Endothelial cell of umbilical vein (primary cell): ENCODE measurements at regions of chr14 and their contacts with region 1.

Region 1: DNA sequence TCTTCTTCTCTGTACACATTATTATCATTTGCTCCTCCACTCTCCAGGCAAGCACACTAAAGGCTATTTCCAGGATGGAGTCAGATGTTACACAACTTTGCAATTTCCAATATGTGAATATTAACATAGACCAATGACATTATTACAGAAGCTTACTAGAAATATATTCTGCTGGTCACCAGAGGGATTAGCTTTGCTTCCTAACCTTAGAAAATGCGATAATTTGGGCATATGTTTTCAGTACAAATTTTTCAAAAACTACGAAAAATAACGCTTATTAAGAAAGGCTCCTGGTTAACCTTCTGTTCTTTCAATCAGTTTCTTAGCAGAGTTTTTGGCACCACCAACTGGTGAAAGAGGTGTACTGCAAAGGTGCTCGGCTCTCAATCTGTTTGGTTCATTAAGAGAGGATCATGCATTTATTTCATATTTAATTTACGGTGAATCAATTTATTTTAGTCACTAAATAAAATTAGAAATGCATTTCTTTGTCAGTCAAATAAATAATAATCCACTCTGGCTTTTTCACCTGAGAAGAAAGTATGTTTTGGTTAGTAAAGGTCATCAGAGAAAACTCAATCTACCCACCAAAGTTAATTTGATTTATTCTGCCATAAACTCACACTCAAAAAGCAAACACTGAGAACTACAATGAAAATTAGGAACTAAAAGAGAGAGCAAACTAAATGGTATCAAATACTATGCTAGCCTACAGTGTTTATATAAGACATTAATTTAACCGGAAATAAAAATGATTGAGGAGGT is 39.2 kb downstream of the EFCAB11 start:
- DNase-seq: peak; percentile 79
- H3K4me3 ChIP-seq: no peak overlapping the region
- H3K27ac ChIP-seq: no peak overlapping the region
- H3K4me1 ChIP-seq: no peaks in the 10 kb centered on the region
- H3K27me3 ChIP-seq: no peaks in the 10 kb centered on the region
- CTCF ChIP-seq: peak; percentile 75
- POLR2A ChIP-seq: no peak

Region 2: DNA sequence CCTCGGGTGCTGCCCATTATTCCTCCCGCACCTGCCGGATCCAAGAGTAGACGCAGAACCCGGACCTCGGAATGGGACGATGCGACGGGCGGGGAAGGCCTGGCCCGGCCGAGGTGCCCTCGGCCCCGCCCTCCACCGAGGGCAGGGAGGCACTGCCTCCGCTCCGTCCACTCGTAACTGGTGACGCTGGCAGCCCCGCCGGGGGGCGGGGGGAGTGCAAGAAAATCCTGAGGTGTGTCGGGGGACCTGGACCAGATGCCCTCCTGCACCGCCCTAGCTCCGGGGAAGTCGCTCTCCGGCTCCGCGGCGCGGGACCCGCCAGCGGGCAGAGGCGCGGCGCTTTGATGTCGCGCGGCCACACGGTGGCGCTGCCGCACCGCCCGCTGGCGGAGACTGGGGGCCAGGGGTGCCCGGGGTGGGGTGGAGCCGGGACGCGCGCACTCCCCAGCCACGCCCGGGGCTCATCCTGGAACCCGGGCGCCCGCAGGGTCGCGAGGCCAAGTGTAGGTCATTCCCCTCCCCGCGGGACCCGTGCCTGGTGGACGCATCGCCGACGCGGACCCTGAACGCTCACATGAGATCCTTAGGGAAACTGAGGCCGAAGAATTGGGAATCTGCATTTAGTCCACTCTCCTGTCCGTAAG is 888.1 kb before region 1 on chr14:
- CTCF ChIA-PET with region 1: interaction called, 18 read pairs
- POLR2A ChIA-PET with region 1: no interaction called
- dilution Hi-C with region 1: no loop called
- intact Hi-C with region 1: loop called (anchors 1 kb)
- DNase-seq: peak; percentile 25
- H3K4me3 ChIP-seq: peak overlapping the region; percentile 40 to 65 (median 56)
- H3K27ac ChIP-seq: no peak overlapping the region
- H3K4me1 ChIP-seq: peaks cover 9% of the 10 kb centered on the region
- H3K27me3 ChIP-seq: peaks cover 25 to 39% of the 10 kb centered on the region in 2 experiments
- CTCF ChIP-seq: peak; percentile 74 to 88
- POLR2A ChIP-seq: no peak

Region 3: GRCh38 chr14:89178802-89179535 is 736.3 kb before region 1 on chr14:
- CTCF ChIA-PET with region 1: interaction called, 7 read pairs
- POLR2A ChIA-PET with region 1: no interaction called
- dilution Hi-C with region 1: no loop called
- intact Hi-C with region 1: loop called (anchors 1 kb)
- DNase-seq: no peak
- H3K4me3 ChIP-seq: no peak overlapping the region
- H3K27ac ChIP-seq: no peak overlapping the region
- H3K4me1 ChIP-seq: no peaks in the 10 kb centered on the region
- H3K27me3 ChIP-seq: no peaks in the 10 kb centered on the region
- CTCF ChIP-seq: no peak
- POLR2A ChIP-seq: no peak

Region 4: GRCh38 chr14:89240414-89240813 is 674.9 kb before region 1 on chr14:
- CTCF ChIA-PET with region 1: no interaction called
- POLR2A ChIA-PET with region 1: no interaction called
- dilution Hi-C with region 1: no loop called
- intact Hi-C with region 1: loop called (anchors 5 kb)
- DNase-seq: peak; percentile 22
- H3K4me3 ChIP-seq: no peak overlapping the region
- H3K27ac ChIP-seq: peak overlapping the region; percentile 54
- H3K4me1 ChIP-seq: peaks cover 17% of the 10 kb centered on the region
- H3K27me3 ChIP-seq: no peaks in the 10 kb centered on the region
- CTCF ChIP-seq: no peak
- POLR2A ChIP-seq: no peak

Region 5: GRCh38 chr14:89773644-89774316 is 141.5 kb before region 1 on chr14:
- CTCF ChIA-PET with region 1: no interaction called
- POLR2A ChIA-PET with region 1: no interaction called
- dilution Hi-C with region 1: no loop called
- intact Hi-C with region 1: loop called (anchors 5 kb)
- DNase-seq: peak; percentile 12
- H3K4me3 ChIP-seq: no peak overlapping the region
- H3K27ac ChIP-seq: no peak overlapping the region
- H3K4me1 ChIP-seq: peaks cover 34% of the 10 kb centered on the region
- H3K27me3 ChIP-seq: no peaks in the 10 kb centered on the region
- CTCF ChIP-seq: no peak
- POLR2A ChIP-seq: no peak

Region 6: DNA sequence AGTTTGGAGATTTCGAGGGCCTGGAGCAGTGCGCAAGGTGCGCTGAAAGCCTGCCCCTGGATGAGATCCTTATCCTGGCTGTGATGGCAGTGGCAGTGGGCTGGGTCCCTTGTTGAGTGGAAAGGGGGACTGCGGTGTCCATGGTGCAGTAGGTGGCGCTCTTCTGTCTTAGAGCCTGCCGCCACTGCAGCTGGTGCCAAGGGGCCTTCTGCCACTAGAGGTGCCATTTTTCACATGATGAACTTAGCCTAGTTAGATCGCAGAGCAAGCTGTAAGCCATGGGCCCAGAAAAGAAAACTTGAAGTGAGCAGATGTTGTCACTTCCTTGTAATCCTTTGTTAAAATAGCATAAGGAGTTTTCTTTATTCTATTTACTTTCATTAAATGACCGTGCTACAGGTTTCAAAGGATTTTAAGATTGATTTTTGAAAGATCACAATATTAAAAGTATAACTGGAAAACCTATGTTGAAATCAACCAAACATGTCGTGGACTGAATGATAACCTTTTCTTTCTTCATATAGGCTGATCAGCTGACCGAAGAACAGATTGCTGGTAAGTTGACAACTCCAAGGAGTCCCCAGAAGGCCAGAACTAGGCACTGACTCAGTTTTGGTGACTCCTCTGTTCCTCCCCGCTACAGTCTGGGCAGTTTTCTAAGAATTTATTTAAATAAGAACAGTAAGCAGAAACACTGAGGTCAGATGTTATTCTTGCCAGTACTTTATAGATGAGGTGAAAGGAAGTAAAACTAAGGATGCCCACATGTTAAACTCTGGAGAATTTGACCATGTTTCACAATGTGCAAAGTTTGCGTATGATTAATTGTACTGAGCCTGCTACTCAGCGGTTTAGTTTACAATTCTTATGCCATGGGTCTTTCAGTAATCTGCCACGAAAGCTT is 484.5 kb after region 1 on chr14:
- CTCF ChIA-PET with region 1: no interaction called
- POLR2A ChIA-PET with region 1: no interaction called
- dilution Hi-C with region 1: no loop called
- intact Hi-C with region 1: no loop called
- DNase-seq: peak; percentile 95
- H3K4me3 ChIP-seq: peak overlapping the region in 1 of 3 experiments; percentile 78
- H3K27ac ChIP-seq: peak overlapping the region; percentile 33
- H3K4me1 ChIP-seq: peaks cover 35% of the 10 kb centered on the region
- H3K27me3 ChIP-seq: no peaks in the 10 kb centered on the region
- CTCF ChIP-seq: peak; percentile 100
- POLR2A ChIP-seq: no peak